Lower lobe of right lung (tissue), 2 donors: ENCODE measurements at regions of chr17 and their contacts with region 1.

Region 1: GRCh38 chr17:71472809-71473789 is 647.7 kb upstream of the SOX9 start:
- DNase-seq: no peak
- ATAC-seq: peak; percentile 61 to 79
- H3K4me3 ChIP-seq: no peak overlapping the region
- H3K27ac ChIP-seq: no peak overlapping the region
- H3K4me1 ChIP-seq: no peaks in the 10 kb centered on the region
- H3K27me3 ChIP-seq: no peaks in the 10 kb centered on the region
- CTCF ChIP-seq: peak; percentile 48

Region 2: GRCh38 chr17:72118335-72119076 is 645.4 kb after region 1 on chr17:
- intact Hi-C with region 1: loop called (anchors 10 kb)
- DNase-seq: no peak
- ATAC-seq: peak in 1 of 2 donors; percentile 28
- H3K4me3 ChIP-seq: peak overlapping the region; percentile 43
- H3K27ac ChIP-seq: no peak overlapping the region
- H3K4me1 ChIP-seq: peaks cover 42% of the 10 kb centered on the region
- H3K27me3 ChIP-seq: peaks cover 85% of the 10 kb centered on the region
- CTCF ChIP-seq: peak; percentile 75